ENCODE measurements at regions of chr6 and their contacts with region 1.

Region 1: GRCh38 chr6:33391278-33391921 is at the start of gene KIFC1:
- DNase-seq: peak; percentile 100
- H3K4me3 Mint-ChIP-seq: peak within 1 kb of the TSS; percentile 82
- H3K27ac Mint-ChIP-seq: peak within 1 kb of the TSS; percentile 97
- H3K4me1 Mint-ChIP-seq: peaks cover 41% of the 10 kb centered on the region
- H3K27me3 Mint-ChIP-seq: no peaks in the 10 kb centered on the region
- total RNA-seq, gene KIFC1: 107 TPM

Region 2: DNA sequence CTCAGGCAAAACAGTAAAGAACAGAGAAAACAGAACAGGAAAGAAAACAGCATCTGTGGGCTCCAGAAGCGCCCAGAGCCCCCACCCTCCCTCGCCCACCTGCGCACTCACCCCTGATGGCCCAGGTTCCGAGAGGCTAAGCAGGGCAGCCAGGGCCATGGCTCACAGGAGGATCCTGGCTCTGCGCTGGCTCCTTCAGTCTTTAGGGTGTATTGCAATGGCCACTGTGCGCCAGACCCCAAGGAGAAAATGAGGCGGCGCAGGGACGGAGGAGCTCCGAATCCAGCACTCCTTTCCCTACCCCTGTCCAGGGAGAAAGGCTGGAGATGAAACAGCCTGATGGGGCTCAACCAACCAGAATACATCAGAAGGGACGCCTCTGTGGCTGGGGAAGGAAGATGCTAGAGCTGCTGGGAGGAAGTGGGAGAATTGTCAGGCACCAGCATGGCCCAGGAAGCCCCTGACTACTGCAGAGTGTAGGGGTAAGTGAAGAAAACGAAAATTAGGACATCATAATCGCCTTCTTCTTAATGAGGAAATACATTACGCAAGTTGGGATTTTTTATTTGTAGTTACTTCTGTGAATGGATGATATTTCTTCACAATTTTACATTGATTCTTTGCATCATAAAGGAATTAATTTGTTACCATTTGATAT is 248.2 kb before region 1 on chr6:
- CTCF ChIA-PET with region 1: no interaction called
- intact Hi-C with region 1: no loop called
- DNase-seq: no peak
- H3K4me3 Mint-ChIP-seq: no peak overlapping the region
- H3K27ac Mint-ChIP-seq: no peak overlapping the region
- H3K4me1 Mint-ChIP-seq: no peaks in the 10 kb centered on the region
- H3K27me3 Mint-ChIP-seq: peaks cover 26% of the 10 kb centered on the region

Region 3: GRCh38 chr6:33317669-33318425 is 73.6 kb before region 1 on chr6 and contains the start of gene ZBTB22:
- CTCF ChIA-PET with region 1: interaction called, 3 read pairs
- intact Hi-C with region 1: loop called (anchors 1 kb)
- DNase-seq: peak; percentile 97
- H3K4me3 Mint-ChIP-seq: peak within 1 kb of the TSS; percentile 94
- H3K27ac Mint-ChIP-seq: peak within 1 kb of the TSS; percentile 95
- H3K4me1 Mint-ChIP-seq: peaks cover 72% of the 10 kb centered on the region
- H3K27me3 Mint-ChIP-seq: no peaks in the 10 kb centered on the region
- total RNA-seq, gene ZBTB22: 8.8 to 9.0 TPM

Region 4: GRCh38 chr6:33417903-33418689 is 26.7 kb after region 1 on chr6 and contains the start of gene CUTA:
- CTCF ChIA-PET with region 1: interaction called, 9 read pairs
- intact Hi-C with region 1: loop called (anchors 1 kb)
- DNase-seq: peak; percentile 100
- H3K4me3 Mint-ChIP-seq: peak within 1 kb of the TSS; percentile 92
- H3K27ac Mint-ChIP-seq: peak within 1 kb of the TSS; percentile 99
- H3K4me1 Mint-ChIP-seq: peaks cover 65% of the 10 kb centered on the region
- H3K27me3 Mint-ChIP-seq: no peaks in the 10 kb centered on the region
- total RNA-seq, gene CUTA: 163 to 181 TPM

Region 5: DNA sequence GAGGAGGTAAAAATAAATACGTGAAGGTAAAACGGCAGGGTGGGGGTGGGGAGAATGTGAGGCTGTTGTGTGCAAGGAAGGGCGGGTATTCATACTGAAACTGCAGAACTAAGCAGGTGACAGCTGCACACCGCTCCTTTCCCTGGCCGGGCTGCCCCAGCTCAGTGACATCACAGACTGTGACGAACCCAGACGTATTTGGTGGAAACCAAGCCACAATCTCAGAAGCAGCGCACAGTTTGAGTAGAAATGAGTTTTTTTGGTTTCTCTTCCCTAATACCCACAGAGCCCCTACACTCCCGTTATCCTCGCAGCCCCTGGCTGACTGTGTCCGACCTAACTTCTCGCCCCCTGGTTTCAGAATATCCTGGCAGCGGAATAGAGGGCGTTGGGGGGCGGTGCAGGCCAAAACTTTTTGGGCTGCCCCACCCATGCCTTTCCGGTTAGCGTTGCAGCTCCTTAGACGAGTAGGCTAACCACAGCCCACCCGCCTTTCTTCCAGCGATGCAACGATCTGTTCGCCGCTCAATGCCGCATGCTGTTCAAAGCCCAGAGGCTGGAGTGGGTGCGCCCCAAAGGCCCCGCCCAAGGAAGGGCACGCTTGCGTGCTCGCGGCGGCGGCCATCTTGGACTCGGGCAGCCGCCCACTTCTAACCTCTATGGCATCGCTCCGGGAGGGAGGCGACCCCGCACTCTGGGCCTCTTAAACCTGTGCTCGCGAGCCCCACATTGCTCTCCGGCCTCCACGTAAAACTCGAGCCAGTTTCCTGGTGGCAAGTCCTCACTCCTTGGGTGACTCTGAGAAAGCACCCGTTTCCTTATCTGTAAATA is 179.6 kb after region 1 on chr6:
- CTCF ChIA-PET with region 1: no interaction called
- intact Hi-C with region 1: loop called (anchors 1 kb)
- DNase-seq: peak; percentile 98
- H3K4me3 Mint-ChIP-seq: peak overlapping the region; percentile 90
- H3K27ac Mint-ChIP-seq: peak overlapping the region; percentile 100
- H3K4me1 Mint-ChIP-seq: peaks cover 53% of the 10 kb centered on the region
- H3K27me3 Mint-ChIP-seq: no peaks in the 10 kb centered on the region

Region 6: DNA sequence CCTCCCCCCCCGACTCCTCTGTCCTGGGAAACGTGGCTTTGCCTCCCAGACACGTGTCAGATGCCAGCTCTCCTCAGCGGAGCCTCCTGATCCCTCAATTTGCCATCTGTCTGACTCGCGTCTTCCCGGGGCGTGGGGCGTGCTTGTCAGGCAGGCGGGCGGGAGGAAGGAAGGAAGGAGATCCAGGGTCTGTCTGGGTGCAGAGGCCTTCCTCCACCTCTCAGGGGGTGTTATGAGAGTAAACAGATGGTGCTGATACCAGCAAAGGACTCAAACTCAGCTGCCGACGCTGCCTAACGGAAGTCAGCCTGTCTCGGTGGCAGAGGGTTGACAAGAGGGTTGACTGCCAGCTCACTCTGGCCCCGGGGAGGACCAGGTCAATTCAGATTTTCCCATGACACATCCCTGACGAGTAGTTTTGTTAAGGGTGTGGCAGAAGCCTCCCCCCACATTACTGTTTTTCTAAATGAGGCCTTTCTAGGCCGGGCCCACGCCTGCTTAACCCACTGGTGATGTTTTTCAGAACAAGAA is 303.1 kb after region 1 on chr6:
- CTCF ChIA-PET with region 1: no interaction called
- intact Hi-C with region 1: loop called (anchors 1 kb)
- DNase-seq: peak; percentile 86
- H3K4me3 Mint-ChIP-seq: peak overlapping the region; percentile 4
- H3K27ac Mint-ChIP-seq: peak overlapping the region; percentile 86
- H3K4me1 Mint-ChIP-seq: peaks cover 80% of the 10 kb centered on the region
- H3K27me3 Mint-ChIP-seq: no peaks in the 10 kb centered on the region

Region 7: DNA sequence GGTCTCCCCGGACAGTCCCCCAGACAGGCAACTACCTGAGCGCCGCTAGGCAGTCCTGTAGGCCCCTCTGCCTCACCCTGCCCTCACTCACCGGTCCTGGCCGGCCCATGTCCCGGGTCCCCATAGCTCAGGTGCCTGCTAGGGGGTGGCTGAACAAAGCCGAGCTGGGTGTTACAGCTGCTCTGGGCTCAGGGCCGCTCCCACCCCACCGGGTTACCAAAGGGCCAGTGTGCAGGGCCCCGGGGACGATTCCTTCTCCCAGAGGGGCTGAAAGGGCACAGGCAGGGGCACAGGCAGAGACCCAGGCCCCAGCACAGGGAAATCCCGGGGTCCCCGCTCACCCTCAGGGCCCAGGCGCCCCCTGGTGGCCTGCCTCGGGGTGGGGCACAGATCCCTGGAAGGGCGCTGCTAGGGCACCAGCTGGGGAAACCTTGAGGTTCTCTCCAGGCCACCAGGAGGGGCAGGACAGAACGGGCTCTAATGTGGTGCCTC is 636.1 kb after region 1 on chr6:
- CTCF ChIA-PET with region 1: no interaction called
- intact Hi-C with region 1: no loop called
- DNase-seq: peak; percentile 63
- H3K4me3 Mint-ChIP-seq: no peak overlapping the region
- H3K27ac Mint-ChIP-seq: no peak overlapping the region
- H3K4me1 Mint-ChIP-seq: no peaks in the 10 kb centered on the region
- H3K27me3 Mint-ChIP-seq: no peaks in the 10 kb centered on the region